Gastrocnemius medialis (tissue), 4 donors: ENCODE measurements at regions of chr22 and their contacts with region 1.

Region 1: GRCh38 chr22:24005201-24005600 is at the start of gene GSTT4:
- DNase-seq: no peak
- ATAC-seq: no peak
- H3K4me3 ChIP-seq: no peak within 1 kb of the TSS
- H3K27ac ChIP-seq: peak within 1 kb of the TSS in 2 of 4 donors; percentile 5 to 31
- H3K4me1 ChIP-seq: peaks cover 0 to 4% of the 10 kb centered on the region in 2 donors
- H3K27me3 ChIP-seq: no peaks in the 10 kb centered on the region
- CTCF ChIP-seq: no peak
- POLR2A ChIP-seq: no peak
- total RNA-seq, gene GSTT4: not detected

Region 2: GRCh38 chr22:23938328-23939016 is 66.7 kb before region 1 on chr22:
- in situ Hi-C with region 1: loop called in 1 of 4 experiments (anchors 5 kb)
- intact Hi-C with region 1: loop called (anchors 5 kb)
- DNase-seq: no peak
- ATAC-seq: no peak
- H3K4me3 ChIP-seq: no peak overlapping the region
- H3K27ac ChIP-seq: no peak overlapping the region
- H3K4me1 ChIP-seq: no peaks in the 10 kb centered on the region
- H3K27me3 ChIP-seq: no peaks in the 10 kb centered on the region
- CTCF ChIP-seq: no peak
- POLR2A ChIP-seq: no peak

Region 3: DNA sequence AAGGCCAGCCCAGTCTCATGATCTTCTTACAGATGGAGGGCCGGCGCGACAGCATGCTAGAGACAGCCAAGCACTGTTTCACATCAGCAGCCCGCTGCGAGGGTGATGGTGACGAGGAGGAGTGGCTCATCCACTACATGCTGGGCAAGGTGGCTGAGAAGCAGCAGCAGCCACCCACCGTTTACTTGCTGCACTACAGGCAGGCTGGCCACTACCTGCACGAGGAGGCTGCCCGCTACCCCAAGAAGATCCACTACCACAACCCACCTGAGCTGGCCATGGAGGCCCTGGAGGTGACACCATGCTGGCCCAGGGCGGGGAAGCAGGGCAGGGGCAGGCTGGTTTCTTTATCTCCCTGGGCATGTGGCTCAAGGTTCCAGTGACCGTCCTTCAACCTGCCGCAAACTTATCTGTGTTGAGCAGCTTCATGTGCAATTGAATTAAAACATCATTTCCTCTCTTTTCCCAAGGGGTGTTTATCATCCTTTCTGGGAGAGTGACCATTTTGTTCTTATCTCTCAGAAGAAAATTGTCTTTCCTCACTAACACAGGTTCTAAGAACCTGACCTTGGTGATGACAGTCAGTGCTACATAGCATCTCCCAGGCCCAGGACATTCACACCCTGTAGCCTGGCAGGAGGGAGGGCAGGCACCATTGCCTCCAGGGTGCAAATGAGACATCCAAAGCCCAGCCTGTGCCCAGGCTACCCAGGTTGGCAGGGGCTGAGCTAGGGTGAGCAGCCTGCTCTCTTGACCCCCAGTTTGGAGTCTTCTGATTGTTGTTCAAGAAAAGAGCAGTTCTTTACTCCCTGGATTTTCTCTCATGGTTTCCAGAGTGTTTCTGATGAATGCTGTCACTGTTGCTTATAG is 86.6 kb after region 1 on chr22:
- in situ Hi-C with region 1: no loop called
- intact Hi-C with region 1: no loop called
- DNase-seq: no peak
- ATAC-seq: no peak
- H3K4me3 ChIP-seq: no peak overlapping the region
- H3K27ac ChIP-seq: no peak overlapping the region
- H3K4me1 ChIP-seq: no peaks in the 10 kb centered on the region
- H3K27me3 ChIP-seq: no peaks in the 10 kb centered on the region
- CTCF ChIP-seq: no peak
- POLR2A ChIP-seq: no peak

Region 4: GRCh38 chr22:24247011-24247507 is 241.9 kb after region 1 on chr22:
- in situ Hi-C with region 1: no loop called
- intact Hi-C with region 1: no loop called
- DNase-seq: no peak
- ATAC-seq: peak in 1 of 2 donors; percentile 16
- H3K4me3 ChIP-seq: no peak overlapping the region
- H3K27ac ChIP-seq: peak overlapping the region; percentile 73 to 82 (median 77)
- H3K4me1 ChIP-seq: peaks cover 14 to 20% of the 10 kb centered on the region in 2 donors
- H3K27me3 ChIP-seq: no peaks in the 10 kb centered on the region
- CTCF ChIP-seq: no peak
- POLR2A ChIP-seq: no peak